Activated T-helper 2 cell treated with anti-CD3 and anti-CD28 coated beads, Interferon-gamma antibody, Interleukin-2, Interleukin-4, amounts not matched to agents 10 μg/mL and 5 μg/mL and 100 μg/mL, durations not matched to agents 14 hours and 24 hours and 36 hours (primary cell): ENCODE measurements at regions of chr1 and their contacts with region 1.

Region 1: DNA sequence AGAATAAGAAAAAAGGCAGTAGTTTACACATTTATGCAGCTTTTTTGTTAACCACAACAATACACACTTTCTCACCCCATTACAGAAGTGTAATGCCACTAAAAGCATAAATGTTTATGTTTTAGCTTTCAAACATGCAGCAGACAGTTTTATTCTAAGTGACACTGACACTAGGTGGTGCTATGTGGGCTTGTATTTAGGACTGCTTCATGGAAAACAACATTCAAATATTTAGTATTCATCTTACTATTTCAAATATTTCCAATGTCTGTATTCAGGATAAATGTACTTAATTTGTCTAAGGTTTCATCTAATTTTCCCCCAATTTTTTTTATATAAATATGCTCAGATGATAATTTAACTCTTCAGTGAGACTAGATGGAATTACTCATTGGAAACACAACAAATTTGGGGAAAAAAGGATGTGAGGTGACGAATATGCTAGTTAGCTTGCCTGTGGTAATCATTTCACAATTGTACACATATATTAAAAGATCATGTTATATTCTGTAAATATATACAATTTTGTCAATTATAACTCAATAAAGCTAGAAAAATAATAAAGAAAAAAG is 71.4 kb downstream of the USP1 start:
- DNase-seq: no peak
- H3K4me3 Mint-ChIP-seq: no peak overlapping the region
- H3K27ac Mint-ChIP-seq: no peak overlapping the region
- H3K4me1 Mint-ChIP-seq: no peaks in the 10 kb centered on the region
- H3K27me3 Mint-ChIP-seq: no peaks in the 10 kb centered on the region

Region 2: GRCh38 chr1:62746085-62746808 is 238.0 kb after region 1 on chr1:
- intact Hi-C with region 1: loop called (anchors 1 kb)
- DNase-seq: no peak
- H3K4me3 Mint-ChIP-seq: no peak overlapping the region
- H3K27ac Mint-ChIP-seq: no peak overlapping the region
- H3K4me1 Mint-ChIP-seq: no peaks in the 10 kb centered on the region
- H3K27me3 Mint-ChIP-seq: peaks cover 19% of the 10 kb centered on the region

Region 3: DNA sequence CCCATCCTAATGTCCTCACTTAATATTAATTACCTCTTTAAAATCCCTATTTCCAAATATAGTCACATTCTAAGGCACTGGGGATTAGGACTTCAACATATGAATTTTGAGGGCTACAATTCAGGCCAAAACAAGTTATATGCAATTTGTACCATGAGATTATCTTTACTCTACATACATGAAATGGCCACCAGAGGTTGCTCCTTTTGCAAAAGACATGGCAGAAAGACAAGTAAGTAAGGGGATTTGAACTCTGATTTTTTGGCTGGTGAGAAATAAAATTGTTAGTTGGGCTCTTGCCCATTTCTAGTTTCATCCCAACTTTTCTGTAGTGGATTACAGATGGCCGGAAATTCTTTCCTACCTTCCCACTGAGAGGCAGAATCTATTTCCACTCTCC is 854.3 kb after region 1 on chr1:
- intact Hi-C with region 1: no loop called
- DNase-seq: no peak
- H3K4me3 Mint-ChIP-seq: no peak overlapping the region
- H3K27ac Mint-ChIP-seq: no peak overlapping the region
- H3K4me1 Mint-ChIP-seq: peaks cover 7% of the 10 kb centered on the region
- H3K27me3 Mint-ChIP-seq: peaks cover 29% of the 10 kb centered on the region

Region 4: GRCh38 chr1:64387389-64388285 is 1879.4 kb after region 1 on chr1:
- intact Hi-C with region 1: no loop called
- DNase-seq: no peak
- H3K4me3 Mint-ChIP-seq: no peak overlapping the region
- H3K27ac Mint-ChIP-seq: no peak overlapping the region
- H3K4me1 Mint-ChIP-seq: no peaks in the 10 kb centered on the region
- H3K27me3 Mint-ChIP-seq: no peaks in the 10 kb centered on the region